GM13976 (cell line): ENCODE measurements at regions of chr10 and their contacts with region 1.

Region 1: GRCh38 chr10:28679581-28680357 is 2.4 kb downstream of the BAMBI start:
- DNase-seq: no peak
- CTCF ChIP-seq: no peak

Region 2: GRCh38 chr10:28445516-28445915 is 234.3 kb before region 1 on chr10:
- in situ Hi-C with region 1: no loop called
- DNase-seq: no peak
- CTCF ChIP-seq: no peak

Region 3: GRCh38 chr10:28984431-28984830 is 304.7 kb after region 1 on chr10:
- in situ Hi-C with region 1: loop called (anchors 10 kb)
- DNase-seq: no peak
- CTCF ChIP-seq: no peak